Tibial artery (tissue), 4 donors: ENCODE measurements at regions of chr10 and their contacts with region 1.

Region 1: GRCh38 chr10:48656241-48656913 is 28.3 kb upstream of the WDFY4 start:
- DNase-seq: peak; percentile 89 to 94
- H3K4me3 ChIP-seq: peak overlapping the region; percentile 63 to 67
- H3K27ac ChIP-seq: peak overlapping the region; percentile 67 to 81
- H3K4me1 ChIP-seq: peaks cover 0 to 16% (median 12%) of the 10 kb centered on the region in 4 donors
- H3K27me3 ChIP-seq: no peaks in the 10 kb centered on the region
- CTCF ChIP-seq: peak; percentile 98 to 100

Region 2: GRCh38 chr10:48363617-48364355 is 292.6 kb before region 1 on chr10:
- intact Hi-C with region 1: loop called (anchors 5 kb)
- DNase-seq: no peak
- H3K4me3 ChIP-seq: no peak overlapping the region
- H3K27ac ChIP-seq: no peak overlapping the region
- H3K4me1 ChIP-seq: peaks cover 0 to 11% (median 7%) of the 10 kb centered on the region in 4 donors
- H3K27me3 ChIP-seq: no peaks in the 10 kb centered on the region
- CTCF ChIP-seq: peak; percentile 62 to 69

Region 3: GRCh38 chr10:48444266-48444665 is 212.1 kb before region 1 on chr10:
- intact Hi-C with region 1: no loop called
- DNase-seq: no peak
- H3K4me3 ChIP-seq: no peak overlapping the region
- H3K27ac ChIP-seq: no peak overlapping the region
- H3K4me1 ChIP-seq: no peaks in the 10 kb centered on the region
- H3K27me3 ChIP-seq: no peaks in the 10 kb centered on the region
- CTCF ChIP-seq: no peak

Region 4: GRCh38 chr10:48551861-48552591 is 104.4 kb before region 1 on chr10:
- intact Hi-C with region 1: loop called (anchors 5 kb)
- DNase-seq: peak in 1 of 2 donors; percentile 30
- H3K4me3 ChIP-seq: no peak overlapping the region
- H3K27ac ChIP-seq: no peak overlapping the region
- H3K4me1 ChIP-seq: peaks cover 0 to 3% (median 0%) of the 10 kb centered on the region in 4 donors
- H3K27me3 ChIP-seq: no peaks in the 10 kb centered on the region
- CTCF ChIP-seq: peak; percentile 59 to 83

Region 5: GRCh38 chr10:48701139-48701901 is 44.9 kb after region 1 on chr10:
- intact Hi-C with region 1: no loop called
- DNase-seq: no peak
- H3K4me3 ChIP-seq: no peak overlapping the region
- H3K27ac ChIP-seq: no peak overlapping the region
- H3K4me1 ChIP-seq: no peaks in the 10 kb centered on the region
- H3K27me3 ChIP-seq: no peaks in the 10 kb centered on the region
- CTCF ChIP-seq: no peak

Region 6: GRCh38 chr10:48856855-48857254 is 200.5 kb after region 1 on chr10:
- intact Hi-C with region 1: no loop called
- DNase-seq: no peak
- H3K4me3 ChIP-seq: no peak overlapping the region
- H3K27ac ChIP-seq: no peak overlapping the region
- H3K4me1 ChIP-seq: no peaks in the 10 kb centered on the region
- H3K27me3 ChIP-seq: no peaks in the 10 kb centered on the region
- CTCF ChIP-seq: no peak